Activated CD8-positive, alpha-beta T cell treated with anti-CD3 and anti-CD28 coated beads for 36 hours (primary cell): ENCODE measurements at regions of chr9 and their contacts with region 1.

Region 1: DNA sequence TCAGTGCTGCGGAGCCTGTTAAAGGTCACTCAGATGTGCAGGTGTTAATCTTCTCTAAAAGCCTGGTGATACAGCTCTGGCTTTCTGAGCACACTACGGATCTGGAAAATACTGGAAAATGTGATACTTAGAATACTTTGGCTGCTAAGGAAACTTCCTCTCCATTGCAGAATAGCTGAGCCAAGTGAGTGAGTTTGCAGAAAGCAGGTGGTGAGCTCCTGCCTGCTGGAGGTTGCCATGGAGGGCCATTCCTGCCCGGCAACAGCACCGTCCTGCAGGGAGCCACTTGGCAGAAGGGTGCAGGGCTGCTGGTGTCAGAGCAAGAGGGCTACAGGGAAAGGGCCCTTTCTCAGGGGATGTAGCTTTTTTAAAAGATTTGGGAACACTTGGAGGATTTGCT is 40.7 kb downstream of the SECISBP2 start:
- DNase-seq: no peak
- ATAC-seq: no peak
- H3K4me3 Mint-ChIP-seq: no peak overlapping the region
- H3K27ac Mint-ChIP-seq: peak overlapping the region; percentile 37
- H3K4me1 Mint-ChIP-seq: peaks cover 11% of the 10 kb centered on the region
- H3K27me3 Mint-ChIP-seq: no peaks in the 10 kb centered on the region
- CTCF ChIP-seq: no peak

Region 2: DNA sequence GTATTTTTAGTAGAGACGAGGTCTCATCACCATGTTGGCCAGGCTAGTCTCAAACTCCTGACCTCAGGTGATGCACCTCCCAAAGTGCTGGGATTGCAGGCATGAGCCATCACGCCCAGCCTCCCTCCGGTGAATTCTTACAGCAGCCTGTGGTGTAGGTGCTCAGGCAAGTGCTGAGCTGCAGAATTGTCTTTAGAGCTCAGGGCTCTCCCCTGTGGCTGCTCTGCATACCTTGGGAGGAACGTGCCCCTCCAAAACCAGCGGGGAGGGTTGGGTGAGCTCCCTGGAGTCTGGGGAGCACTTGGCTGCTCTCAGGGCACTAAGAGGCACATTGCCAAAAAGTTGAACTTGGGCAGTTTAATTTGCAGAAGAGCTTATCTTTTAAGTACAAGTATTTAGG is 11.3 kb before region 1 on chr9:
- CTCF ChIA-PET with region 1: interaction called, 5 read pairs
- POLR2A ChIA-PET with region 1: interaction called, 16 read pairs
- intact Hi-C with region 1: no loop called
- DNase-seq: no peak
- ATAC-seq: no peak
- H3K4me3 Mint-ChIP-seq: no peak overlapping the region
- H3K27ac Mint-ChIP-seq: no peak overlapping the region
- H3K4me1 Mint-ChIP-seq: peaks cover 29% of the 10 kb centered on the region
- H3K27me3 Mint-ChIP-seq: no peaks in the 10 kb centered on the region
- CTCF ChIP-seq: no peak